ENCODE measurements at regions of chr1 and their contacts with region 1.

Region 1: GRCh38 chr1:159132271-159132881 is 39.0 kb upstream of the CADM3 start:
- DNase-seq: peak in 1 of 2 experiments; percentile 53
- H3K4me3 ChIP-seq: no peak overlapping the region
- H3K27ac ChIP-seq: no peak overlapping the region
- H3K4me1 ChIP-seq: no peaks in the 10 kb centered on the region
- H3K27me3 ChIP-seq: peaks cover 30% of the 10 kb centered on the region
- CTCF ChIP-seq: peak; percentile 87

Region 2: GRCh38 chr1:158398818-158399514 is 733.4 kb before region 1 on chr1 and contains the start of gene OR10T2:
- CTCF ChIA-PET with region 1: no interaction called
- POLR2A ChIA-PET with region 1: no interaction called
- intact Hi-C with region 1: no loop called
- DNase-seq: no peak
- H3K4me3 ChIP-seq: no peak within 1 kb of the TSS
- H3K27ac ChIP-seq: no peak within 1 kb of the TSS
- H3K4me1 ChIP-seq: no peaks in the 10 kb centered on the region
- H3K27me3 ChIP-seq: no peaks in the 10 kb centered on the region
- CTCF ChIP-seq: no peak
- total RNA-seq, gene OR10T2: not detected in 2 replicates

Region 3: GRCh38 chr1:159089184-159089791 is 43.1 kb before region 1 on chr1:
- CTCF ChIA-PET with region 1: no interaction called
- POLR2A ChIA-PET with region 1: no interaction called
- intact Hi-C with region 1: no loop called
- DNase-seq: no peak
- H3K4me3 ChIP-seq: no peak overlapping the region
- H3K27ac ChIP-seq: no peak overlapping the region
- H3K4me1 ChIP-seq: no peaks in the 10 kb centered on the region
- H3K27me3 ChIP-seq: no peaks in the 10 kb centered on the region
- CTCF ChIP-seq: peak; percentile 64

Region 4: DNA sequence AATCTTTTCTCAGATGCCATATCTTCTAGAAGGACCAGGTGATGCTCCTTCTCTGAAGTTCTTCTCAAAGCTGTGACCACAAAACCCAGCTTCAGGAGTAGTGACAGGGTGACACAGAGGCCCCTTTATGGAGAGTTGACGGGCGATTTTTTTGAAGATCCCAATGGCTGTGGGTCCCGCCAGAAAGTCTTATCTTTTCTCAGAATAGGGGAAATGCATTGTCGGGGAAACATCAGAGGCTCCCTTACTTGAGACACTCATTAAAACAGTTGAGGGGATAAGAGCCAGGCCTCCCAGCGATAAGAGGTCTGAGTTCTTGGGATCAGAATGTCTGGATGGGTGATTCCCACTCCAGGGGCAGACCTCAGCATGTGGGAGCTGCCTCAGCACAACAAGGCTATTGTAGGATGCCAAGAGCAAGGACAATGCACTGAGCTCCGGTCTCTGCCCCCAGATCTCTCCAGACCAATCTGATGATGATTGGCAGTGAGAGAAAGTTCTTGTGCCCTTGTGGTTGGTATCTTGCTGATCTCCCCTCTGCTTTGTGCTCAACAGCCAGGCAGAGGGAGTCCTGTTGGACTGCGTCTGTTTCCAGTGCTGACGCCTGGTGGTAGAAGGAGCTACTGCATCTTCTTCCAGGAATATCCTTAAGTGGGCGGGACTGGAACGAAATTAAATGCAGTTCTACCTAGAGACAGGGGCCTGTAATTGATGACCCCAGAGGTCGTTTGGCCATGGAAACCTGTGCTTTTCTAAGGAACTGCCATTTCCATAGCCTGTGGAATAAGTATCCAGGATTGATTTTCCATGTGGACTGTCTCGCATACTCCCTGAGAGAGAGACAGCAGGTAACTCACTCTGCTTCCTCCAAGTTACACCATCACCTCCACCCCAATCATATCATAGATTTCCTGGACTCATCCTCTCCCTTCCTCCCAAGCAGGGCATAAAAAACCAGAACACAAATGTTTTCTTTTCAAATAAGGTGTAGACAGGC is 65.5 kb after region 1 on chr1:
- CTCF ChIA-PET with region 1: no interaction called
- POLR2A ChIA-PET with region 1: no interaction called
- intact Hi-C with region 1: loop called (anchors 5 kb)
- DNase-seq: peak in 1 of 2 experiments; percentile 28
- H3K4me3 ChIP-seq: no peak overlapping the region
- H3K27ac ChIP-seq: no peak overlapping the region
- H3K4me1 ChIP-seq: no peaks in the 10 kb centered on the region
- H3K27me3 ChIP-seq: peaks cover 75% of the 10 kb centered on the region
- CTCF ChIP-seq: peak; percentile 82

Region 5: DNA sequence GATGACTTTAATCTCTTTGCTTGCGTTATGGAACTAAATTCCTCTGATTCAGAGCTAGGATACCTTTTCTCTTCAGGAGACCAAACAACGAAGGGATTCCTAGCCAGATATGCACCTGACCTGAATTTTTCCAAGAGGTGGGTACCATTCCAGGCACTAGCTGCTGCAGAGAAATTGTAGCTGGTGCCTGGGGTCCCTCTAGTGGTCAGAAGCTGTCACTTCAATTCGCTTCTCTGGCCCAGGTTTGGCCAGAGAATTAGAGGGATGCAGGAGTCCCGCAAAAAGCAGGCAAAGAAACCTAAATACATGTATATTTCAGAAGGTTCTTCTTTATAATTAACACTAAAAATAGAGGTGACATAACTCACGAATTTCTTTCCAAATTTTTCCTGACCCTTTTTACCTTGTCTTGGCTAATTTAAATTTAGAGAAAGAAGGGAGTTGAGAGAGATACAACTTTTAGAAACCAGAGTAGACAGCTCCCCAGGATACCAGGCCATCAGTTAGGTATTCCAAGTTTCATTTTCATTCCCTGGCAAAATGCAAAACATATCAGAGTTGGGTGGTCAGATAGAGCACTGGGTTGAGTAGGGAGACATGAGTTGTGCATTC is 81.9 kb after region 1 on chr1:
- CTCF ChIA-PET with region 1: no interaction called
- POLR2A ChIA-PET with region 1: no interaction called
- intact Hi-C with region 1: loop called (anchors 1 kb)
- DNase-seq: peak in 1 of 2 experiments; percentile 31
- H3K4me3 ChIP-seq: no peak overlapping the region
- H3K27ac ChIP-seq: no peak overlapping the region
- H3K4me1 ChIP-seq: no peaks in the 10 kb centered on the region
- H3K27me3 ChIP-seq: peaks cover 47% of the 10 kb centered on the region
- CTCF ChIP-seq: peak; percentile 92

Measured in PC-9 (cell line).